ENCODE measurements at regions of chr7 and their contacts with region 1.

Region 1: DNA sequence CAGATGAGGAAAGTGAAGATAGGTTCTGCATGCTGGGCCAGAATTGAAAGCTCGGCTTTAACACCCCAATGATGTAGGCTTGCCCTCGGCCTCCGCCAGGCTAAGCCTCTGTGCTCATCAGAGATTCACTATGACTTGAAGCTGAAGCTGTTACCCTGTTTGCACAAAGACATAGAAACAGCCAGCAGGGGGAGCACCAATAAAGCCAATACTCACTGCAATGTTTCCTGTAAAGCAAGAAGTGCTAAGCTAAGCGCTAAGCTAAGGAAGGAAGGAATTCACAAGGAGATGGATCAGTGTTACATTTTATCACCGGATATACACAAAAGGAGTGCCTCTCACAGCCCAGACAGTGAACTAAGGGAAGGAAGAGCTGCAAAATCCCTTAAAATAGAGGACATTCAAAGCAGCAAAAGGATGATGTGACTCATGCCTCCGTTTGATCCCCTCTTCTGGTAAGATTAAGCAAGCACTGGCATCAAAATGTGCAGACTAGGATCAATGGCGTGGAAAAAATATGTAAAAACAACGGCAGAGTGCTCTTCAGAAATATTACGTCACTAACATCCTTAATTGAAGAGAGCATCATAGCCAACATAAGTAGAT is 153.8 kb downstream of the COBL start:
- DNase-seq: peak; percentile 94
- H3K4me3 Mint-ChIP-seq: no peak overlapping the region
- H3K27ac Mint-ChIP-seq: no peak overlapping the region
- H3K4me1 Mint-ChIP-seq: no peaks in the 10 kb centered on the region
- H3K27me3 Mint-ChIP-seq: no peaks in the 10 kb centered on the region
- CTCF ChIP-seq: peak; percentile 94

Region 2: DNA sequence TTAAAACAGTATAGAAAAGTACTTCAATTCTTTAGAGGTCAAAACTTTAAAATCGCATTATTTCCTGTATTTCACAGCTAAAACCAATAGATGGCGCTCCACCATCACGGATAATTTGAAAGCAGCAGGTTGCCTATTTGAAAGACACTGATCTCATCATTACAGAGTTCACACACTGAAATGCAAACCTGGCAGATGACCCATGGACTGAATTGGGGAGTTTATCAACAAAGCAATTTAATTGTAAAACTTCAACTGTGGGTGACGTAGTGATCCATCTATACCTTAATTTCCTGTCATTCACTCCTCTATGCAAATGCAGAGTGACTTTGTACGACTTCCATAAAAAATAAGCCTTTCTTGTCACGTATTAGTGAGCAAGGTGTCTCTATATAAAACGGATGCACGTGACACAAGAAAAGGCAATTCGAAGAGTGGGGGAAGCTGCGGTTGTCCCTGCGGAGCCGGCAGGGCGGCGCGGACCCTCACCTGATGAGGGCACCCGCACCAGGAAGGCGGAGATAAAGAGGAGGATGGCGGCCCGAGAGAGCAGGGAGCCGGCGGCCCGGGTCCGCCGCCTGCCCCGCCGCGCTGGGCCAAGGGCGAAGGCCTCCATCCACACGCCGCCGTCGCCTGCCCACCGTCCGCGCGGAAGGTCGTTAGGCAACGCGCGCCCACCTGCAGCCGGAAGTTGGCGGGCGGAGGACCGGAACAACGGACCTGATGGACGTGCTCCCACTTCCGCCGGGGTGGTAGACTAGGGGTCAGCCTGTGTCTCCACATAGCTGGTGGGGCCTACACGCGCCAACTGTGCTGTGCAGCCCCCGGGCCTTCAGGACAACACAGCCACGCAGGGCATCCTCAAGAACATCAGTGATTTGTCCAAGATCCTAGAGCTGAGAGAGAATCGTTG is 1070.0 kb before region 1 on chr7 and contains the start of gene ZPBP:
- CTCF ChIA-PET with region 1: interaction called, 9 read pairs
- intact Hi-C with region 1: loop called (anchors 2 kb)
- DNase-seq: peak; percentile 38
- H3K4me3 Mint-ChIP-seq: no peak within 1 kb of the TSS
- H3K27ac Mint-ChIP-seq: no peak within 1 kb of the TSS
- H3K4me1 Mint-ChIP-seq: no peaks in the 10 kb centered on the region
- H3K27me3 Mint-ChIP-seq: peaks cover 44% of the 10 kb centered on the region
- CTCF ChIP-seq: peak; percentile 87
- total RNA-seq, gene ZPBP: not detected in 2 replicates

Region 3: DNA sequence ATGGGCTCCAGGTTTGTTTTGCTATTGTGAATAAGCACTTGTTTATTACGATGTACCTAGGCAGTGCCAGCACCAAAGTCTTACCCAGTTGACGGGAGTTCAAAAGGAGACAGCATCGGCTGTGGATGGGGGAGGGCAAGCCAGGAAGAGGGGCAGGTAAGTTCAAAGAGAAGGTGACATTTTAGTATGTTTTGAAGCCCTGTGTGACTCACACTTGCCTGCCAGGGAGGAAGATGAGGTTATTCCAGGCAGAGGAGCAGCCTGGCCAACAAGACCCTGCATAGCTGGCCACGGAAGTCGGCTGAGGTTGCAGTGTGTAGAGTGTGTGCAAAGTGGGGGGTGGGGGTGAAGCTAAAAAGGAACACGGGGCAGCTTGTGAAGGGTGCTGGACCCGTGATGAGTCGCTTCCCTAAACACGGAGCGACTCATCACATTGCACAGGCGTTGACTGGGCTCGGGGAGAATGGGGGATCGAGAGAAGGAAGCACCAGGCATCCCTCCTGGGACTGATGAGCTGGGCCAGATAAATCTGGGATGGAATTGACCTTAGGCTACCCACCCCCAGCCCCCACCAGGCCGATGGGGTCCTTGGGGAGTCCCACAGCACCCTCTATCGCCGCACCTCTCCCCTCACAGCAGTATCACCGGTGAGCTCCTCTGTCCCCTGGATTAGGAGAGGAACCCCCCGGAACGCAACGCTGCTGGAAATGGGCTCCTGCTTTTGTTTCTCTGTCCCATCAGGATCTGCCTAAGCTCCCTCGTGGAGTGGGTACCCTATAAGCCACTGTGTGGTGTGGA is 956.2 kb before region 1 on chr7:
- CTCF ChIA-PET with region 1: interaction called, 23 read pairs
- intact Hi-C with region 1: loop called (anchors 2 kb)
- DNase-seq: no peak
- H3K4me3 Mint-ChIP-seq: no peak overlapping the region
- H3K27ac Mint-ChIP-seq: no peak overlapping the region
- H3K4me1 Mint-ChIP-seq: peaks cover 7% of the 10 kb centered on the region
- H3K27me3 Mint-ChIP-seq: peaks cover 96% of the 10 kb centered on the region
- CTCF ChIP-seq: no peak

Region 4: DNA sequence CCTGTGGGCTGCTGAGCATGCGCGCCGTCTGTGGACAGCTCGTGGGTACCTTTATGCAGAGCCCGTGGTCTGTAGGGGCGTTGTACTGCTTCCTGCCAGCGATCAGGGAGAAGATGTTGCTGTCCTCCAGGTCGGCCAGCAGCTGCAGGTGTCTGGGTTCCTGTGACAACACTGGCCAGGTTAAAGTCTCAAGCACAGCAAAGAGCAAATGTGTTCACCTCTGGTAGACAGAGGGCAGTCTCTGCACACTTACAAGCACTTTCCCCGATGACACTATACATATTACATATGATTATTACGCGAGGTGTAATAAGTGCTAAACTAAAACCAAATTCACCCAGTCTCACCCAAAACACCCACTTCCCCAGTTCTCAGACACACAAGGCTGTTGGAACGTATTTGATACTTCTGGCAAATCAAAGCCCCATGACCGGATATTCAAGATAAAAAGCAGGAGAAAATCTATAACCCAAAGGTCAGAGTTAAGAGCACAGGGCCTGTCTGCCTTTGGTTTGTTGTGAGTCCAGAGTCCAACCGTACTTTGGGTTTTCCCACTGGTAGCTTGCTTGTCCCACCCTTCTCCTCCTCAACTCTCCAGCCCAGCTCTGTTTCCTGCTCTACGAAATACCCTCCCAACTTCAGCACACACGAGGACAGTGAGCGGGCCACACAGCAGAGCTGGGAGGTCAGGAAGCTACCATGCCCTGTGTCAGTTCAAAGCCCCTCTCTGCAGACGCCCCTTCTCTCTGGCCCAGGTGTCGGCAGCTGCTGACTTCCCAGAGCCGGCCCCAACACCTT is 547.9 kb before region 1 on chr7:
- CTCF ChIA-PET with region 1: interaction called, 7 read pairs
- intact Hi-C with region 1: loop called (anchors 2 kb)
- DNase-seq: no peak
- H3K4me3 Mint-ChIP-seq: peak overlapping the region; percentile 20
- H3K27ac Mint-ChIP-seq: no peak overlapping the region
- H3K4me1 Mint-ChIP-seq: peaks cover 34% of the 10 kb centered on the region
- H3K27me3 Mint-ChIP-seq: no peaks in the 10 kb centered on the region
- CTCF ChIP-seq: peak; percentile 40

Region 5: GRCh38 chr7:51224811-51225612 is 62.2 kb after region 1 on chr7:
- CTCF ChIA-PET with region 1: interaction called, 21 read pairs
- intact Hi-C with region 1: loop called (anchors 2 kb)
- DNase-seq: peak; percentile 86
- H3K4me3 Mint-ChIP-seq: no peak overlapping the region
- H3K27ac Mint-ChIP-seq: no peak overlapping the region
- H3K4me1 Mint-ChIP-seq: peaks cover 15% of the 10 kb centered on the region
- H3K27me3 Mint-ChIP-seq: no peaks in the 10 kb centered on the region
- CTCF ChIP-seq: peak; percentile 62

Region 6: DNA sequence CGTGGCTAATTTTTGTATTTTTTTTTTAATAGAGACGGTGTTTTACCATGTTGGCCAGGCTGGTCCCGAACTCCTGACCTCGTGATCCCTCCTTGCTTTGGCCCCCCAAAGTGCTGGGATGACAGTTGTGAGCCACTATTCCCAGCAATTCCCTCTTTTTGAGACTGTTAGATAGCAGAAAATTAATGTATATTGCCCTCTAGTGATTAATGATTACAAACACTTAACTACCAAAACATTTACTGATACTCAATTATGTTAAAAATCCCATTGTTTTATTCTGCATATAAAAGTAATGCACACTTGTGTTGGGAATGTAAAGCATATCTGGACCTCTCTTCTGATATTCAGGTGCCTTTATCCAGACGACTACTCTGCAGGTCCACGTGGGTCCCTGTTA is 195.0 kb after region 1 on chr7:
- CTCF ChIA-PET with region 1: interaction called, 13 read pairs
- intact Hi-C with region 1: no loop called
- DNase-seq: no peak
- H3K4me3 Mint-ChIP-seq: no peak overlapping the region
- H3K27ac Mint-ChIP-seq: no peak overlapping the region
- H3K4me1 Mint-ChIP-seq: peaks cover 30% of the 10 kb centered on the region
- H3K27me3 Mint-ChIP-seq: peaks cover 12% of the 10 kb centered on the region
- CTCF ChIP-seq: peak; percentile 41

Region 7: DNA sequence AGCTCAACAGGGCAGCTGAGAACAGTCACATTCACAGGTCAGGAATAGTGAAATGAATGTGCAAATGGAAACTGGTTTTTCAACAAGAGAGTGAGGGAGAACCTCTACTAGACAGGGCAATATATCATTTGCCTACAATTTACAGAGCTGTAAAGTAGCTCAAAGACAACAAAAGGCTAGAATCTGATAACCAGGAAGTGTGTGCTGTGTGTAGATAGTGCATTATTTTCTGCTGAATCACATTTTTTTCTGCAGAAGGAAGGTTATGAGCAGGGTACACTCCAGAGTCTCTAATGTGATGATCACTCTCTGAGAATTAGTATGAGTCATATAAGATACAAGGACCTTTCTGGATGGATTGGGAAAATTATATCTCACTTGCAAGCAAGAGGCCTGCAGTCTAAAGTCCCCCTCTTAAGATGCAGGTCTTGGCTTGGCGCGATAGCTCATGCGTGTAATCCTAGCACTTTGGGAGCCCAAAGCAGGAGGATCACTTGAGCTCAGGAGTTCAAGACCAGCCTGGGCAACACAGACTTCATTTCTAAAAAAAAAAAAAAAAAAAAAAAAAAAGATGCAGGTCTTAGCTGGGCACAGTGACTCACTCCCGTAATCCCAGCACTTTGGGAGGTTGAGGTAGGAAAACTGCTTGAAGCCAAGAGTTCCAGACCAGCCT is 213.7 kb after region 1 on chr7:
- CTCF ChIA-PET with region 1: interaction called, 30 read pairs
- intact Hi-C with region 1: no loop called
- DNase-seq: peak; percentile 32
- H3K4me3 Mint-ChIP-seq: no peak overlapping the region
- H3K27ac Mint-ChIP-seq: peak overlapping the region; percentile 29
- H3K4me1 Mint-ChIP-seq: peaks cover 18% of the 10 kb centered on the region
- H3K27me3 Mint-ChIP-seq: no peaks in the 10 kb centered on the region
- CTCF ChIP-seq: no peak